MCF 10A (cell line): ENCODE measurements at regions of chr17 and their contacts with region 1.

Region 1: GRCh38 chr17:42019509-42020404 is at the start of gene NKIRAS2:
- DNase-seq: peak; percentile 87
- H3K4me3 Mint-ChIP-seq: peak within 1 kb of the TSS; percentile 99
- H3K27ac Mint-ChIP-seq: peak within 1 kb of the TSS; percentile 99
- H3K4me1 Mint-ChIP-seq: peaks cover 27% of the 10 kb centered on the region
- H3K27me3 Mint-ChIP-seq: no peaks in the 10 kb centered on the region
- CTCF ChIP-seq: peak; percentile 88
- total RNA-seq, gene NKIRAS2: 34.1 and 40.0 TPM in 2 replicates

Region 2: GRCh38 chr17:41918314-41919164 is 101.2 kb before region 1 on chr17 and contains the start of gene ACLY:
- CTCF ChIA-PET with region 1: interaction called, 3 read pairs
- POLR2A ChIA-PET with region 1: interaction called, 21 read pairs
- intact Hi-C with region 1: no loop called
- DNase-seq: peak; percentile 98
- H3K4me3 Mint-ChIP-seq: peak within 1 kb of the TSS; percentile 87
- H3K27ac Mint-ChIP-seq: peak within 1 kb of the TSS; percentile 78
- H3K4me1 Mint-ChIP-seq: peaks cover 30% of the 10 kb centered on the region
- H3K27me3 Mint-ChIP-seq: no peaks in the 10 kb centered on the region
- CTCF ChIP-seq: no peak
- total RNA-seq, gene ACLY: 67.7 and 67.9 TPM in 2 replicates

Region 3: GRCh38 chr17:41930009-41930832 is 89.5 kb before region 1 on chr17 and contains the start of gene ODAD4:
- CTCF ChIA-PET with region 1: interaction called, 4 read pairs
- POLR2A ChIA-PET with region 1: interaction called, 14 read pairs
- intact Hi-C with region 1: no loop called
- DNase-seq: peak; percentile 96
- H3K4me3 Mint-ChIP-seq: peak within 1 kb of the TSS; percentile 84
- H3K27ac Mint-ChIP-seq: peak within 1 kb of the TSS; percentile 92
- H3K4me1 Mint-ChIP-seq: peaks cover 17% of the 10 kb centered on the region
- H3K27me3 Mint-ChIP-seq: no peaks in the 10 kb centered on the region
- CTCF ChIP-seq: peak; percentile 19
- total RNA-seq, gene ODAD4: 0.96 and 1.3 TPM in 2 replicates

Region 4: GRCh38 chr17:42002792-42003301 is 16.9 kb before region 1 on chr17:
- CTCF ChIA-PET with region 1: interaction called, 7 read pairs
- POLR2A ChIA-PET with region 1: interaction called, 32 read pairs
- intact Hi-C with region 1: no loop called
- DNase-seq: no peak
- H3K4me3 Mint-ChIP-seq: no peak overlapping the region
- H3K27ac Mint-ChIP-seq: no peak overlapping the region
- H3K4me1 Mint-ChIP-seq: peaks cover 17% of the 10 kb centered on the region
- H3K27me3 Mint-ChIP-seq: no peaks in the 10 kb centered on the region
- CTCF ChIP-seq: no peak

Region 5: DNA sequence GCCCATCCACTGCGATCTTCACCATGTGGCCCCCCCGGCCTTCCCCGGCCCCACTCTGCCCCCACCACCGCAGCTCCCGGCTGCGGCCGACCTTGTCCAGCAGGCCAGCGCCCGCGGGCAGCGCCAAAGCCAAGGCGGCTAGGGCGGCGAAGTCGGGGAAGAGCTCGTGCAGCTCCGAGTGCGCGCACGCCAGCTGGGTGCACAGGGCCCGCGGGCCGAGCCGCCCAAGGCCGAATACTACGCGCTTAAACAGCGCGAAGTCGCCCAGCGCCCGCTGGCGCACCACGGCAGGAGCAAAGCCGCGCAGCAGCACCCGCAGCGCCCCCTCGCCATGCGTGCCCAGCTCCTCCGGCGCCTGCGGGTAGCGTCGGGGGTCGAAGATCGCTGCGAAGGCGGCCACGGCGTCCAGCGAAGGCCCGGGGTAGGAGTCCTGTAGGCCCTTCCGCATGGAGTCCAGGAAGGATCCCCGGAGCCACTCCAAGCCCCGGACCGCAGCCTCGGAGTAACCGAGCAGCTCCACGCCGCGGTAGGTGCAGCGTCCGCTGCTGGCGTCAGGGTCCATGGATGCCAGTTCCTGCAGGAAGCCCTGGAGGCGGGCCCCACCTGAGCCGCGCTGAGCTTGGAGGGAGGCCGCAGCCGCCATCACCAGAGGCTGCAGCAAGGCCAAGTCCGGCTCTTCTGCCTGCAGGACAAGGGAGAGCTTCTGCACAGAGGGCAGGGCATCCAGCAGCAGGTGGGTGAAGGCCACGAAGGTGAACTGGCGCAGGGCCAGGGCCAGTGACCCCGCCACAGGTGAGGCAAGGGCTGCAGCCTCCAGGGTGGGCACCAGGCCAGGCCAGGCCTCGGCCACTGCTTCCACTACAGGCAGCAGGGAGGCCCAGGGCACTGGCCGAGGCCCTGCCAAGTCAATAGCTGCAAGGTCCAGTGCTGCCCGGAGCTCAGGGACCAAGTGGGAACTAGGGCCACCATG is 20.3 kb after region 1 on chr17:
- CTCF ChIA-PET with region 1: interaction called, 22 read pairs
- POLR2A ChIA-PET with region 1: interaction called, 4 read pairs
- intact Hi-C with region 1: no loop called
- DNase-seq: no peak
- H3K4me3 Mint-ChIP-seq: no peak overlapping the region
- H3K27ac Mint-ChIP-seq: no peak overlapping the region
- H3K4me1 Mint-ChIP-seq: no peaks in the 10 kb centered on the region
- H3K27me3 Mint-ChIP-seq: no peaks in the 10 kb centered on the region
- CTCF ChIP-seq: no peak

Region 6: DNA sequence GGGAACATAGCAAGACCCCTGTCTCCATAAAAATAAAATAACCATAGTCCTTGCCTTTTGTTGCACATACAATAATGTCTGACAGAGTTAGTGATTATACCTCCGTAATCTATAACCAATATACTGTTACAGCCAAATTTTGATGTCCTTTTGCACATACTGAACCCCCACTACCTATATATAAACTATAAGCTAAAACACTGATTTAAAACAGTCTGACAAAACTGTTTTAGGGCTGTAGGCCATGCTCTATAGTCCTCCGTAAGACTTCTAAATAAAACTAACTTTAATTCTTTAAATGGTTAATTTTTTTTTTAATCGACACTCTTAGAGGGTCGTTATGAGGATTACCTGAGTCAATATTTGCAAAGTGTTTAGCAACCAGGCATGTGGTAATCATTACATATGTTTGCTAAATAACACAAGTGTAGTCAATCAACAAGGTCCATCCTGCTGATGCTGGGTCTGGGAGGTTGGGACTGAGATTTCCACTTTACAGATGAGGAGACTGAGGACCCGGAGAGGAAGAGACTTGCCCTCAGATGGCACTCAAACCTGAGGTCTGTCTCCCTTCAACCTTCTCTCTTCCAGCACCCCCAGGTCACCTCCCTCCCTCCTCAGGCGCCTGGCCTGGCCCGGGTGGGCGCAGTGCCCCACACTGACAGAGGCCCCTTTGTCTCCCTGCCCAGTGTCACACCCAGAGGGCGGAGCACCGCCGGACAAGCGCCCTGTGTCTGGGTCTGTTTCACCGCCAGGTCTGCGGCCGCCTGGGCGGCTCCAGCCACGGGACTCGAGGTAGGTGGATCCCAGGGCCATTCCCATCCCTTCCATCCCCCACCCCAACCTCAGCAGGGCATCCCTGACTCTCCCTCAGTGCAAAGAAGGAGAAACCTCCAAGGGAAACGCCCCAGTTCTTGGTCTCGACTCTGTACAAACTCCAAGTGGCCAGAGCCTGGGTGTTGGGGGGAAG is 68.3 kb after region 1 on chr17:
- CTCF ChIA-PET with region 1: no interaction called
- POLR2A ChIA-PET with region 1: no interaction called
- intact Hi-C with region 1: no loop called
- DNase-seq: no peak
- H3K4me3 Mint-ChIP-seq: no peak overlapping the region
- H3K27ac Mint-ChIP-seq: no peak overlapping the region
- H3K4me1 Mint-ChIP-seq: no peaks in the 10 kb centered on the region
- H3K27me3 Mint-ChIP-seq: peaks cover 21% of the 10 kb centered on the region
- CTCF ChIP-seq: no peak

Region 7: DNA sequence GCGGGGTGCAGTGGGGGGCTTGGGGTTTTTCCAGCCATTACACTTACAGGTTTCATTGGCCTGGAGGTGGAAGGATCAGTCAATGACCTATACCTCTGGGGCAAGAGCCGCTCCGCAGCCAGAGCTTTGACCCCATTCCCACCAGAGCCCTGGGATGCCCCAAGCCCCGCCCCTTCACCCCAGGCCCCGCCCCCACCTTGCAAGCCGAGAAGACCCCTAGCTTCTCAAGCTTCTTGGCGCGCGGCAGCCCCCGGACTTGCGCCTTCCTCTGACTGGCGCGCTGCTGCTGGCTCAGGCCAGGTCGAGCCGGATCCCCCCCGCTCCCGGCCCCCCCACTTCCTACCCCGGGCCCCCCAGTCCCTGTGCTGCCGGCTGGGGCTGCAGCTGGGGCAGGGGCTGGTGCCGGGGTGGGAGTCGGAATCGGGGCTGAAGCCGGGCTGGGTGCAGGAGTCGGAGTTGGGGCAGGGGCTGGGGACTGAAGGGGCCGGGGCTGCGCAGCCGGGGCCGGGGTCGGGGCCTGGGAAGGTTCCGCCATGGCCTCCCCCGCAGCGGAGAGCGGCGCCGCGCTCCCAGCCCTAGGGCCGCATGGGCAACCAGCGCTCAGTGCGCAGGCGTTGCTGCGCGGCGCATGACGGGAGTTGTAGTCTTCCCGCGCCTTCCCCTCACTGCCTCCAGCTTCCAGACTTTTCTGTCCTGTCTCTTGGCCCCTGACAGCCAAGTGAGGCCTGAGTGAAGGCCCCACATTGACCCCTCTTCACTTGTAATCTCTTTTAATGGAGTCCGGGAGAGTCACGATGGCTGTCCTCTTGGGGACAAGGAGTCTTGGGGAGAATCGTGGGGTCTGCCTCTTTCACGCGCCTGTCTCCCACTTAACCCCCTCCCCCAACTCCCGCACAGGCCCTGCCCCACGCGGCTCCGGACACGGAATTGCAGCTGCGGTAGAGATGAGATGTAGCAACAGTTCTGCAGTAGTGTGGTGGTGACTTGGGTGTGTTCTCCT is 101.3 kb after region 1 on chr17 and contains the start of gene KAT2A:
- CTCF ChIA-PET with region 1: interaction called, 40 read pairs
- POLR2A ChIA-PET with region 1: interaction called, 6 read pairs
- intact Hi-C with region 1: no loop called
- DNase-seq: peak; percentile 83
- H3K4me3 Mint-ChIP-seq: peak within 1 kb of the TSS; percentile 53
- H3K27ac Mint-ChIP-seq: no peak within 1 kb of the TSS
- H3K4me1 Mint-ChIP-seq: peaks cover 6% of the 10 kb centered on the region
- H3K27me3 Mint-ChIP-seq: no peaks in the 10 kb centered on the region
- CTCF ChIP-seq: no peak
- total RNA-seq, gene KAT2A: 37.4 and 44.6 TPM in 2 replicates